ENCODE measurements at regions of chr19 and their contacts with region 1.

Region 1: DNA sequence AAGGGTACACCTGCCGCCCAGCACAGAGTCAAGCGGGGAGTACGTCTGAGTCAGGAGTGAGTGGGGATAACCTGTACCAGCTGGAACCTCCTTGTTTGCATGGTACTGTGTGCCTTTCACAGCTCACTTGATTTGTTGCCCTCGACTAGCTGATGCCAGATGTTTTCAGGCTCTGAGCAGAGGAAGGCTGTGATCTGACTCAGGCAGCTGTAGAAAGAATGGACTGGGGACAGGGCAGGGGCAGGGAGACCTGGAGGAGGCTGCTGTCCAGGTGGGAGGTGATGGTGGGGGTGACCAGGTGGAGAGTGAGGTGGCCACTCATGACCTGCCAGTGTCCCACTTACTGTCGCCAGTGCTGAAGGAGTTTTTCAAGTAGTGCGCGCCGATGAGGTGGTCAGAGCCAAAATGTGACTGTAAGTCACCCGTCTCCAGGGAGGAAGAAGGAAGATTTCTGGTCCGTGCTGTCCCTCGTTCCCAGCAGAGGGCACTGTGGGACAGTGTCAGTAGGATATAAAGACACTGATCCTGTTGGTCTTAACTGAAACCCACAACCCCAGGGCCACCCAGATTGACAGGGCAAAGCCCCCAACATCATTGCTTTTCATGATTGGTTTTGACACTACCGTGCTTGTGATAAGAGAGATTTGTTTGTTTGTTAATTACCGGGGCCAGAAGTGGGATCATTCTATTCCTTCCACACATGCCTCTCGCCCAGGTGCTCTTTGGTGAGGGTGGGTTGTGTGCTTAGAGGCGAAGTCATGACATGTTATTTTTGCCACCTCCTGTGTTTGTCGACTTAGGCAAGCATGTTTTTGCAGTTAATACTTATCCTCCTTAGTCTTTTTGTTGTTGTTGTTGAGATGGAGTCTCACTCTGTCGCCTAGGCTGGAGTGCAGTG is 128.4 kb downstream of the DPF1 start:
- DNase-seq: peak; percentile 71 to 93
- H3K4me3 ChIP-seq: no peak overlapping the region
- CTCF ChIP-seq: no peak
- POLR2A ChIP-seq: no peak

Region 2: DNA sequence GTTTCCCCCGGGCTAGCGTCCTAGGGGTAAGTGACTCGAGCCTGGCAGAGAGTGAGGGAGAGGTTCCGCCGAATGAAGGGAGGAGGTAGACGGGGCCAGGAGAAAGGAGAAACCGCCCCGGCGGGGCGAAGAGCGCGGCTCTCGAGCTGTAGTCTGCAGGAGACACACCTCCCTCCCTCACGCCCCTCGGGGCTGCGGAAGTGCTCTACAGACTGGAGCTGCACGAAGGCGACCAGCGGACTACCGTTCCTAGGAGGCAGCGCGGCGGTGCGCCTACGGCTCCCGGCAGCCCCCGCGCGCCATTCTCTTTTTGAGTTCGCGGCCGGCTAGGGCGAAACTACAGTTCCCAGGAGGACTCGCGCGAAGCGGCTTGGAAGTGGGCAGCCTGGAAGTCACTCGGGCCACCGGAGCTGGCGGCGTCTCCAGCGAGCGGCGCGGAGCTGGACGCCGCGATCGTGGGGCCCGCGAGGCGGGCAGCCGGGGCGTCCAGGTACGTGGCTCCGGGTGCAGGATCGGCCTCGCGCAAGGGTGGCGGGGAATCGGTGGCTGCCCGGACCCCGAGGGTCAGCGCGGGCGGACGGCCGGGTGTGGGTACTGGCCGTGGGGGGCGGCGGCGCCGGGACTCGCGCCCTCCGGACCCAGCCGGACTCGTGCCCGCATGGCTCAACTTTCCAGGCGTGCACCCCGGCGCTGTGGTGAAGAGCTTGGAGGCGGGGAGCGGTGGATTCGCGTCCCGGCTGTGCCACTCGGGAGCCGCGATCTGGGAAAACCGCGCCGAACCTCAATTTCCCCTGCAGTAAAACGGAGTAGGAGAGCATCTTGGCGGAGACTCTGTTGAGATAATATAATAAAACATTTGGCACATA is 188.6 kb before region 1 on chr19 and contains the start of gene SIPA1L3:
- intact Hi-C with region 1: loop called (anchors 10 kb)
- DNase-seq: peak; percentile 93 to 99
- H3K4me3 ChIP-seq: peak within 1 kb of the TSS; percentile 83
- CTCF ChIP-seq: no peak
- POLR2A ChIP-seq: no peak
- total RNA-seq, gene SIPA1L3: 50.0 to 69.8 (median 53.6) TPM

Region 3: GRCh38 chr19:38387550-38388348 is 292.1 kb after region 1 on chr19 and contains the start of gene GGN:
- intact Hi-C with region 1: no loop called
- DNase-seq: peak; percentile 86 to 97
- H3K4me3 ChIP-seq: peak within 1 kb of the TSS; percentile 21
- CTCF ChIP-seq: no peak
- POLR2A ChIP-seq: no peak
- total RNA-seq, gene GGN: 0.36 to 1.9 (median 1.5) TPM

Measured in lower leg skin (tissue), 4 donors.